Posterior cingulate gyrus (tissue), 11 donors: ENCODE measurements at regions of chr1 and their contacts with region 1.

Region 1: GRCh38 chr1:202122639-202123335 is at the start of gene GPR37L1:
- DNase-seq: peak; percentile 75 to 98 (median 82)

Region 2: GRCh38 chr1:202009326-202010179 is 113.2 kb before region 1 on chr1:
- intact Hi-C with region 1: loop called (anchors 1 kb)
- DNase-seq: peak in 8 of 10 donors; percentile 49 to 95 (median 81)

Region 3: DNA sequence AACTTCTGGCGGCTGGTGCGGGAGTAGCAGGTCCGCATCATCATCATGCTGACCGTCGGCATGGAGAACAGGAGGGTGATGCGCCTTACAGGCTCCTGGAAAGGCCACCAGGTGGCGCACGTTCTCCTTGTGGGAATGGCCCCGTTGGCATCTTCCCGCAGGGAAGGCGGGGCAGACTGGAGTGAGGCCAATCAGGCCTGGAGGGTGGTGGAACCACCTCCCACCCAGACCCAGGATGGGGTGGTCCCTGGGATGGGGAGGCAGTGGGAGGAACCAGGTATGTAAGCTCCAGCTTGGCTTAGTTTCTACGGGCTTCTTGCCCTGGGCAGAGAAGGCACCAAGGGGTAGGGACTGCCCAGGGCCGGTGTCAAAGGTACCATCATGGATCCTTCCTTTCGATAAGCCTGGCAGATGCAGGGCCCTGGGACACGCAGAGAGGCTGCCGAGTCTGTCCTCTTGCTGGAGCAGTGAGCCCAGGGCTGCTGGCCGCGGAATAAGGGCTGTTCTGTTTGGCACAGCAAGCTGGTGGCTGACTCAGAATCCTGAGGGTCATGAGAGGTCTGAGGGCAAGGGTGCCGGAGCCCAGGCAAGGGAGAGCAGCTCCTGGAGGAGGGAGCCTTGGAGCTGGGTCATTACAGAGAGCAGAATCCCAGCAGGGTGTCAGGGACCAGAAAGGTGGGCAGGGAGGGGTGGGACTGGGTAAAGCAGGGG is 62.1 kb after region 1 on chr1:
- intact Hi-C with region 1: no loop called
- DNase-seq: peak; percentile 69 to 97 (median 84)